BJ (cell line): ENCODE measurements at regions of chr6 and their contacts with region 1.

Region 1: GRCh38 chr6:37169496-37170272 is at the start of gene PIM1:
- DNase-seq: peak; percentile 69
- H3K4me3 ChIP-seq: peak within 1 kb of the TSS; percentile 86
- H3K27me3 ChIP-seq: no peaks in the 10 kb centered on the region
- CTCF ChIP-seq: no peak
- polyA plus RNA-seq, gene PIM1: 13.9 and 20.7 TPM in 2 replicates

Region 2: DNA sequence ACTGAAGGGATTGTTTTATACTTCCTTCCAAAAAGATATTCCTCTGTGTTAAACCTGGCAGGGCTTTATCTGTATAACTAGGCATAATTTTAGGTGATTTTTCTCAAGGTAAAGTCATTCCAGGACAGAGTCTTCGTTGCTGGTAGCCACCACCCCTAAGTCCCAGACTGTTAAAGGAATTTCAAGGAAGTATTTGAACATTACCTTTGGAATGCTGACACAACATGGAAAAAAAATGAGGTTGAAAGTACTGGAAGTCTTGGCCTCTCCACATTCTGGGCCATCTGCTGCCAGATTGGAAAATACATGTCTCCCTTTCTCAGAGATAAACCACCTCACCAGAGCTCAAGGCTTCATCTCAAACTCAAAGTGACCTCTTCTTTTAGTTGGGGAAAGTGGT is 755.2 kb before region 1 on chr6:
- CTCF ChIA-PET with region 1: no interaction called
- POLR2A ChIA-PET with region 1: no interaction called
- DNase-seq: no peak
- H3K4me3 ChIP-seq: no peak overlapping the region
- H3K27me3 ChIP-seq: no peaks in the 10 kb centered on the region
- CTCF ChIP-seq: no peak

Region 3: DNA sequence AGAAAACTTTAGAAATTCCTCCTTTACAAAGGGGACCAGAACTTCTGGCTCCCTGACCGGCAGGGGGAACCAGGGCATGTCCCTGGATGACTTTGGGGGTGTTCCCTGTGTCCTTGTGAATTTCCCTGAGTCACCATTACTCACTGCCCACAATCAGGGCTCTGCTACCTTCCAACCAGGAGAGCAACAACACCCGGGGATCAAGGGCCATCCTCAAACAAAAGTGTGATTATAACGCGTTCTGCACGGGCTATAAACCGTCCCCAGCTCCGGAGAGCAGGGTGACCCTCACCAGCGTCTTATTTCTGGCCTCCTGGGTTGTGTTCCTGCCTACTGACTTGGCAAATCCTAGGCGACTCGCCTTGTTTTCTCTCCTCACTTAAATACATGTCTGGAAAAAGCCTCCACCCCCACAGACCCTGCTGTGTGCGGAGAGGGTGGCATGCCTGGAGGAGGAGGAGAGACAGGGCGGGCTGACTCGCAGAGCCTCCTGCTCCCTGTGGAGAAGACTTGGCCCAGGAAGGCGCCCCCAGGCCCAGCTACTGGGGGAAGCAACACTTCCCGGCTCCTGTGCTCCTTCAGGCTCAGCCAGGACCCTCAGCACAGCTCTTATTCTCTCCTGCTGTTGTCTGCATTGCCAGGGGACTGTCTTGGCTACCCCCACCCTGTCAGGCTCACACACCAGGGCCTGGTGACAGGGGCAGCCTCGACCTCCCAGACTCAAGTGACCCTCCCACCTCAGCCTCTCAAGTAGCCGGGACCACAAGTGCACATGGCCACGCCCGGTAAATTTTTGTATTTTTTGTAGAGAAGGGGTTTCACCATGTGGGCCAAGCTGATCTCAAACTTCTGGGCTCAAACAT is 110.1 kb before region 1 on chr6:
- CTCF ChIA-PET with region 1: interaction called, 243 read pairs
- POLR2A ChIA-PET with region 1: interaction called, 37 read pairs
- DNase-seq: peak; percentile 90
- H3K4me3 ChIP-seq: no peak overlapping the region
- H3K27me3 ChIP-seq: no peaks in the 10 kb centered on the region
- CTCF ChIP-seq: peak; percentile 84

Region 4: GRCh38 chr6:37127961-37128862 is 41.5 kb before region 1 on chr6:
- CTCF ChIA-PET with region 1: interaction called, 10 read pairs
- POLR2A ChIA-PET with region 1: interaction called, 8 read pairs
- DNase-seq: no peak
- H3K4me3 ChIP-seq: no peak overlapping the region
- H3K27me3 ChIP-seq: no peaks in the 10 kb centered on the region
- CTCF ChIP-seq: no peak

Region 5: GRCh38 chr6:37200085-37200484 is 30.4 kb after region 1 on chr6:
- CTCF ChIA-PET with region 1: interaction called, 13 read pairs
- POLR2A ChIA-PET with region 1: no interaction called
- DNase-seq: no peak
- H3K4me3 ChIP-seq: no peak overlapping the region
- H3K27me3 ChIP-seq: peaks cover 10% of the 10 kb centered on the region
- CTCF ChIP-seq: no peak